WTC11 (cell line): ENCODE measurements at regions of chr2 and their contacts with region 1.

Region 1: GRCh38 chr2:102240640-102241370 is 54.0 kb downstream of the IL1RL2 start:
- DNase-seq: peak; percentile 91
- ATAC-seq: peak; percentile 92
- H3K4me3 Mint-ChIP-seq: no peak overlapping the region
- H3K27ac Mint-ChIP-seq: no peak overlapping the region
- H3K4me1 Mint-ChIP-seq: peaks cover 20% of the 10 kb centered on the region
- H3K27me3 Mint-ChIP-seq: no peaks in the 10 kb centered on the region
- CTCF ChIP-seq: peak; percentile 94

Region 2: DNA sequence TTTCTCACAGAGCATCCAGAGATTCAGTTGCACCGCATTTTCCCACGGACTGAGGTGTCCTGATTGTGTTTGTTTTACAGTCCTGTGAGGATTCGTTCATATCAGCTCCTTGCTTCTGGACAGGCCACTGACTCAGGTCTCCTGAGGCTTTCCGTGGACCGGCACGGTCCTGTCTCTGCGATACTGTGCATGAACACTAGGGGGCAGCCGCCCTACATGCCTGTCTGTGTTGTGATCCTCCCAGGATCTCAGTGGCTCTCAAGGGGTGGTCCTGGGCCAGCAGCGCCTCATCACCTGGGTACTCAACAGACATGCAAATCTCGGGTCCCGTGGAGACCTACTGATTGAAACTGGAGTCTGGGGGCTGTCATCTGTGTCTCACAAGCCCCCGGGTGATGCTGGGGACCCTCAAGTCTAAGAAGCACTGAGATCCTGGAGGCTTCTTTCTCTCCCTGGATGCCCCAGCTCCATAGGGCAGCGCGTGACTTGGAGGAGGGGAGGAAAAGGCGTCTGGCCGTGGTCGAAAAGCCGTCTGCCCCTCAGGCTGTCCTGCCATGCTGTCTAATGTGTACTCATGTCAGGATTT is 220.1 kb before region 1 on chr2:
- CTCF ChIA-PET with region 1: interaction called, 55 read pairs
- POLR2A ChIA-PET with region 1: no interaction called
- DNase-seq: peak; percentile 93
- ATAC-seq: peak; percentile 98
- H3K4me3 Mint-ChIP-seq: no peak overlapping the region
- H3K27ac Mint-ChIP-seq: no peak overlapping the region
- H3K4me1 Mint-ChIP-seq: 0 out of 2 replicates have a peak, but pooled peaks cover 7% of the 10 kb centered on the region
- H3K27me3 Mint-ChIP-seq: no peaks in the 10 kb centered on the region
- CTCF ChIP-seq: peak; percentile 98

Region 3: DNA sequence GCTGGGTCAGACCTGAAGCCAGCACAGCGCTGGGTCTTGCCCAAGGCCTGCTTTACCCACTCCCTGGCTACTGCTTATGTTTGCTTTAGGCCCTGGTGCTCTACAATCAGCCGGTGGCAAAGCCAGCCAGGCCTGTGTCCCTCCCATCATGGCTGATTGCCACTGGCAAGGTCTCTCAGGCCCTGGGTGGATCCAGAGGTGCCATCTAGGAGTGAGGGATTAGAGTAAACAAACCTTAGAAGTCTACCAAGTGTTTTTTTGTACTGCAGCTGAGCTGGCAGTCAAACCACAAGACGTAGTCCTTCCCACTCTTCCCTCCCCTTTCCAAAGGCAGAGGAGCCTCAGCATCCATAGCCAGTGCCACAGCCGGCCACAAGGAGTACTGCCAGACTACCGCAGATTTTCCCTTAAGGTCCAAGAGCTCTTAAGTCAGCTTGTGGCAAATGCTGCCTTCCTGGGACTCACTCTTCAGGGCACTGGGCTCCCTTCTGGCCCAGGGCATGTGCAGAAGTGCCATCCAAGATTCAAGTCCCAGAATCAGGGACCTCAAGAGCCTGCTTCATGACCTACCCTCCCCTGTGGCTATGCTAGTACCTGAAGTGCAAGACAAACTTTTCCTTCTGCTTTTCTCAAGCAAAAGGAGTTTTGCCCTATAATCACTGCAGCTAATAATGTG is 34.0 kb before region 1 on chr2:
- CTCF ChIA-PET with region 1: interaction called, 13 read pairs
- POLR2A ChIA-PET with region 1: no interaction called
- DNase-seq: no peak
- ATAC-seq: peak; percentile 64
- H3K4me3 Mint-ChIP-seq: no peak overlapping the region
- H3K27ac Mint-ChIP-seq: no peak overlapping the region
- H3K4me1 Mint-ChIP-seq: no peaks in the 10 kb centered on the region
- H3K27me3 Mint-ChIP-seq: no peaks in the 10 kb centered on the region
- CTCF ChIP-seq: no peak

Region 4: DNA sequence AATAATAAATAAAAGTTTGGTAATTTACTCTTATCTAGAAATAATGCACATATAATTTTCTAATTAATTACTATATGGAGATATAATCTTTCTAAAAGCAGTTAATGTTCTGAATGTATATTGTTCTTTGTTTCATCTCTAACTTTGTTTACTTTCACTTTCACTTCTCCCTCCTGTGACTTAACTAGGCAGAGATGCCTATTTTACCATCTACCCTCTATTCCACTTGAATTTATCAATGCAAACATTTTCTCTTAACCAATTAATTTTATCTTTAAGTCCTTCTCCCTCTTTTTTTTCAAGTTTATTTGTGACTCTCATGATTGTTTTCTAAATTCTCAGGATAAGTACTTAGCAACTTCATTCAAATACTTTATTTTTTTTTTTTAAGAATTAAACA is 15.5 kb after region 1 on chr2:
- CTCF ChIA-PET with region 1: interaction called, 59 read pairs
- POLR2A ChIA-PET with region 1: no interaction called
- DNase-seq: no peak
- ATAC-seq: no peak
- H3K4me3 Mint-ChIP-seq: no peak overlapping the region
- H3K27ac Mint-ChIP-seq: no peak overlapping the region
- H3K4me1 Mint-ChIP-seq: no peaks in the 10 kb centered on the region; the same call in 1 of the 2 replicates
- H3K27me3 Mint-ChIP-seq: peaks cover 9% of the 10 kb centered on the region
- CTCF ChIP-seq: no peak

Region 5: DNA sequence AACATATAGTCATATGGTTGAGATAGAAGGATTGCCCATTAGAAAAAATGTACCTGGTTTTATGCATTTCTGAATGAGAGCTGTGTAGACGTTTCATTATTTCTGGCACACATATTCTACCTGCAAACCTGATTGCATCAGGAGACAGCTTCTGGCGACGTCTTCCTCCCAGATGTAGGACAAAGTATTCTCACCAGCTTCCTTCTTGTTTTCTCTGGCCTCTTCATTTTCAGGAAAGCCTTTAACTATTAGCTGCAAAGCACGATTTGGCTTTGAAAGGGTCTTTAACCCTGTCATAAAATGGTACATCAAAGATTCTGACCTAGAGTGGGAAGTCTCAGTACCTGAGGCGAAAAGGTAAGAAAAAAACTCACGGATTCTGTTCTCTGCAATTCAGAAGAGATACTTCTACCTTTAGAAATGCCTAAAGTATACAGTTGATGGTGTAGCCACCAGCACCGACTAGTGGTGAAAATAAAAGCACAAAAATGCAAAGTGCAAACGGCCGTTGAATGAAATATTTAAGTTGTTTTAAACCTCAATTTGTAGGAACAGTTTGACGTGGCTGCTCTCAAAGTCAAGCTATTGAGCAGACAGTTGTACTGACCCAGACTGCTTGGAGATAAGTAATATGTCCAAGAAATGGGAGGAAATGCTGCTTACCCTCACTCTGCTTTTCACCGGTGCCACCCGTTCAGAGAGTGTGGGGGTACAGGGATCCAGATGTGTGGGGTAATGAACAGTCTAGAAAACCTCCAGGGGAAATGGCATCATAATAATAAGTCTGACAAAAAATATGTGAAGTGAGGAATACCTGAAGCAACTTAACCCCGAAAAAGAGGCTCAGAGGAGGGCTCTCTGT is 202.4 kb after region 1 on chr2:
- CTCF ChIA-PET with region 1: interaction called, 23 read pairs
- POLR2A ChIA-PET with region 1: no interaction called
- DNase-seq: peak; percentile 15
- ATAC-seq: peak; percentile 72
- H3K4me3 Mint-ChIP-seq: no peak overlapping the region
- H3K27ac Mint-ChIP-seq: no peak overlapping the region
- H3K4me1 Mint-ChIP-seq: no peaks in the 10 kb centered on the region
- H3K27me3 Mint-ChIP-seq: no peaks in the 10 kb centered on the region
- CTCF ChIP-seq: 0 out of 2 replicates have a peak, but pooled peaks have one; percentile 22